Activated B cell treated with CpG ODN at 0.5 μM for 24 hours (primary cell): ENCODE measurements at regions of chr16 and their contacts with region 1.

Region 1: DNA sequence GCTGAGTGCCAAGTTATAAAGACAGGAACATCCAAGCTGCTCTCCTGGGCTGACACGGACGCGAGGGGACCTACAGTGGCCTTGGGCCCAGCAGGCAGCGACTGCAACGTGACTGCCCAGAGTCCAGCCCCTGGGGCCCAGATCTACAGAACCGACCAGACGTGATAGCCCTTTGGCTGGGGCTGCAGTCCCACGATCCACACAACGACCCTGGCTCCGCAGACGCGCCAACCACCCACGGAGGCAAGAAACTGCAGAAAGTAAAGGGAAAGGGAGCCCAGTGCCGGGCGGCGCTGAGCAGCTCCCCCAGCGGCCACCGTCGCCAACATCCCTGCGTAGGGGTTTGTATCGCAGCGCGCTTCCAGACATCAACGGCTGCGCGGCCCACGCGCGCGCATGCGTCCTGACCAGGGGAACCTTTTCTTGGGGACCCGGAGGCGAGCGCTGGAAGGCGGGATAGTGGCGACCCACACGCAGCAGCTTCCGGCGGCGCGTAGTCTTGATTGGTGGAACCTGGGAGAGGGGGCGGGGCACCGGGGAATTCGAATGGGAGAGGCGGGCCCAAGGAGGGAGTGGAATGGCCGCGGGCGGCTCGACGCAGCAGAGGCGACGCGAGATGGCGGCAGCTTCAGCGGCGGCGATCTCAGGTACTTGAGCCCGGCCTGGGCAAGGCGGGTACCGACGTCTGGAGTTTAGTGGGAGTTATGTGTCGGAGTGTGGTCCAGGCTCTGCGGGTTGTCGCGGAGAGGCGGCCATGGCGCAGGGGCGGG is at the start of gene KIF22:
- DNase-seq: peak; percentile 99
- ATAC-seq: peak; percentile 97
- H3K4me3 Mint-ChIP-seq: peak within 1 kb of the TSS; percentile 98
- H3K27ac Mint-ChIP-seq: peak within 1 kb of the TSS; percentile 93
- H3K4me1 Mint-ChIP-seq: peaks cover 34% of the 10 kb centered on the region
- H3K27me3 Mint-ChIP-seq: no peaks in the 10 kb centered on the region
- CTCF ChIP-seq: no peak
- total RNA-seq, gene KIF22: 33.1 and 40.1 TPM in 2 replicates

Region 2: GRCh38 chr16:29710227-29711219 is 79.8 kb before region 1 on chr16:
- CTCF ChIA-PET with region 1: no interaction called
- POLR2A ChIA-PET with region 1: interaction called, 3 read pairs
- intact Hi-C with region 1: loop called (anchors 2 kb)
- DNase-seq: no peak
- ATAC-seq: peak; percentile 97
- H3K4me3 Mint-ChIP-seq: no peak overlapping the region
- H3K27ac Mint-ChIP-seq: no peak overlapping the region
- H3K4me1 Mint-ChIP-seq: peaks cover 26% of the 10 kb centered on the region
- H3K27me3 Mint-ChIP-seq: no peaks in the 10 kb centered on the region
- CTCF ChIP-seq: peak; percentile 30

Region 3: DNA sequence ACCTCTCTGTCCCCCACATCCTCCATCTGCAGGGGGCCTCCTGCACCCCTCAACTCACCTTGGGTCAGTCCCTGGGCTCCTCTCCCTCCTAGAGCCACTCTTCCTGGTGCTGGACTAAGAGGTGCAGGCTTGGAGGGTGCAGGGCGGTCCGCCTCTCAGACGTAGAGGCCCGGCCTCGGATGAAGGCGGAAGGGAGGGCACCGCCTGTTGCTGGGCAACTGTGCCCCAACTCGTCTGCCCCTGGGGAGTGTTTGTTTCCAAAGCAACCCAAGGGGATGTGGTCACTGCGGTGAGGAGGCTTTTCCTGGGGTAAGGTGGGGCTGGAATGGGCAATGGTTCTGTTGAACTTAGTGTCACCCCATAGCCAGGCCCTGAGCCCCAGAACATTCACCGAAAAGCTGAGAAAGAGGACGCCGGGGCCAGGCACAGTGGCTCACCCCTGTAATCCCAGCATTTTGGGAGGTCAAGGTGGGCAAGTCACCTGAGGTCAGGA is 44.5 kb before region 1 on chr16 and contains the start of gene C16orf54:
- CTCF ChIA-PET with region 1: no interaction called
- POLR2A ChIA-PET with region 1: interaction called, 6 read pairs
- intact Hi-C with region 1: loop called (anchors 1 kb)
- DNase-seq: peak; percentile 80
- ATAC-seq: peak; percentile 86
- H3K4me3 Mint-ChIP-seq: peak within 1 kb of the TSS; percentile 94
- H3K27ac Mint-ChIP-seq: peak within 1 kb of the TSS; percentile 96
- H3K4me1 Mint-ChIP-seq: peaks cover 65% of the 10 kb centered on the region
- H3K27me3 Mint-ChIP-seq: no peaks in the 10 kb centered on the region
- CTCF ChIP-seq: no peak
- total RNA-seq, gene C16orf54: 20.4 and 22.5 TPM in 2 replicates

Region 4: DNA sequence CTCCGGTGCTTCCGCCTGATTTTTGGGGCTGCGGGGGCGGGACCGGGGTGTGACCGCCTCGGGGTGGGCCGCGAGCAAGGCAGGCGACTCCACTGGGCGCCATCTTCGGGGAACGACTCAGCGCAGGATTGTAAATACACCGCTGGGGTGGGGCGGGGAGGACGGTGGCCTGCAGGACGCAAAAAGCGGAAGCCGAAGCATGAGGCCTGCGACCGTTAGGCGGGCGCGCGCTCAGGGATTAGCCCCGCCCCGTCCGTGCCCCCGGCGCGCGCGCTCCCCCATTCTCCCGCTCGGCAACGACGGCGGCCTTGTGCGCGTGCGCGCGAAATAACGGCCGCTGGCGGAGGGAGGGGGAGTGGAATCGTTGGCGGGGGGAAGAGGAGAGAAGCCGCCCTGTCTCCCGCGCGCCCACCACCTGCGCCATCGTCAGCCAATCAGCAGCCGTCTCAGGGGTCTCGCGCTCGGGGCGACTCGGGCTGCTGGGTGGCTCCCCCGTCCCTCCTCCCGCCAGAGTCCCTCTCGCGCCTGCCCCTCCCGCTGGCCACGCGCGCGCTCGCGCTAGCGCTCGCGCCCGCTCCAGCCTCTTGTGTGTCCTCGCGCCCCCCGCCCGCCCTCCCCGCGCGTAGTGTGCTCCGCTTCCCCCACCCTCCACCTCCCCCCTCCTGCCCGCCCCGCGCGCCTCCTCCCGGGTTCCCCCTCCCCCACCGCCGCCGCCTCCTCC is 15.2 kb after region 1 on chr16:
- CTCF ChIA-PET with region 1: interaction called, 8 read pairs
- POLR2A ChIA-PET with region 1: interaction called, 58 read pairs
- intact Hi-C with region 1: loop called (anchors 1 kb)
- DNase-seq: peak; percentile 96
- ATAC-seq: peak; percentile 70
- H3K4me3 Mint-ChIP-seq: peak overlapping the region; percentile 100
- H3K27ac Mint-ChIP-seq: peak overlapping the region; percentile 100
- H3K4me1 Mint-ChIP-seq: peaks cover 45% of the 10 kb centered on the region
- H3K27me3 Mint-ChIP-seq: no peaks in the 10 kb centered on the region
- CTCF ChIP-seq: no peak

Region 5: DNA sequence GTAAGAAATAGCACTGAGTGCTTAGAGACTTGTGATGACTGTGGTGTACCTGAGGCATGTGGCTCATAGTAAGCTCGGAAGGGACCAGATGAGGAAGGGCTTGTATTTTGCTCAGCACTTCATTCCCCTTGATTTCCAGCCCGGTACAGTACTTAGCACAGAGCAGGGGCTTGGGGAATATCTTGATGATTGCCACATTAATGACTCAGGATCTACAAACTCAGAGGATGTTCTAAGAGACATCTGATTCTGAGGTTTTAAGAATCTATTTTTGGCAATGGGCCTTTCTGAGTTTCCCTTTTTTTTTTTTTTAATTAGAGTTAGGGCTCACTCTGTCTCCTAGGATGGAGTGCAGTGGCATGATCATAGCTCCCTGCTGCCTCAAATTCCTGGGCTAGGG is 119.0 kb after region 1 on chr16:
- CTCF ChIA-PET with region 1: no interaction called
- POLR2A ChIA-PET with region 1: no interaction called
- intact Hi-C with region 1: no loop called
- DNase-seq: no peak
- ATAC-seq: no peak
- H3K4me3 Mint-ChIP-seq: no peak overlapping the region
- H3K27ac Mint-ChIP-seq: no peak overlapping the region
- H3K4me1 Mint-ChIP-seq: no peaks in the 10 kb centered on the region
- H3K27me3 Mint-ChIP-seq: no peaks in the 10 kb centered on the region
- CTCF ChIP-seq: no peak

Region 6: DNA sequence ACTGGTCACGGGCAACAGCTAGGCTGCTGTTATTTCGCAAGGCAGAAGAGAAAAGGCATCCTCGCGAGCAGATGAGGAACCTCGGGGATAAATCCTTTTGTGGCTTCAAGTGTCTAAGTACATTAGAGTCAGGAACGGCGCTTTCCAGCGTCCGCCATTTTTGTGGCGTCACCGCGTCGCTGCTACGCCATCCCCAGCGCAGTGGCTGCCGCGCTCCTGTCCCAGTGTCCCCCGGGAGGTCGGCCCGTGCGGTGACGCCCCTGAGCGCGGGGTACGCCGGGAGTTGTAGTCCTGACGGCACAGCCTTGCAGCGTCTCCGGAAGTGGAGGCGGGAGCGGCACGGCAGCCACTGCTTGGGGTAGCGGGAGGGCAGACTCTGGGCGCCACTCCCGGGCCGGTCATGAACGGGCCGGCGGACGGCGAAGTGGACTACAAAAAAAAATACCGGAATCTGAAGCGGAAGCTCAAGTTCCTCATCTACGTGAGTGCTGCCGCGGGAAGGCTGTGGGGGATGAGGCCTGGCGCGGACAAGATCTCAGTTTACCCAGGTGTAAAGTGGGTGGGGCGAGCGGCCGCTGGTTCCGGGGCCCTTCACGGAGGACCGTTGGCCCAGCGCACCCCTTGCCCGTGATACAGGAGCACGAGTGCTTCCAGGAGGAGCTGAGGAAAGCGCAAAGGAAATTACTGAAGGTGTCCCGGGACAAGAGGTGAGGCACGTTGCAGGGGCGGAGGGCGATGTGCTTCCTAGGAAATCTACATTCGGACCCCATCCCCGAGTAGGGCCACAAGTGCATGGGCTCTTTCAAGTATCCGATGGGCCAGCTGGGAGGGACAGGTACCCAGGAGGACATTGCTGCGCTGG is 205.8 kb after region 1 on chr16 and contains the start of gene INO80E:
- CTCF ChIA-PET with region 1: no interaction called
- POLR2A ChIA-PET with region 1: no interaction called
- intact Hi-C with region 1: loop called (anchors 2 kb)
- DNase-seq: peak; percentile 100
- ATAC-seq: peak; percentile 96
- H3K4me3 Mint-ChIP-seq: peak within 1 kb of the TSS; percentile 98
- H3K27ac Mint-ChIP-seq: peak within 1 kb of the TSS; percentile 97
- H3K4me1 Mint-ChIP-seq: peaks cover 29% of the 10 kb centered on the region
- H3K27me3 Mint-ChIP-seq: no peaks in the 10 kb centered on the region
- CTCF ChIP-seq: no peak
- total RNA-seq, gene INO80E: 83.5 and 93.6 TPM in 2 replicates